B cell (primary cell): ENCODE measurements at regions of chr20 and their contacts with region 1.

Region 1: DNA sequence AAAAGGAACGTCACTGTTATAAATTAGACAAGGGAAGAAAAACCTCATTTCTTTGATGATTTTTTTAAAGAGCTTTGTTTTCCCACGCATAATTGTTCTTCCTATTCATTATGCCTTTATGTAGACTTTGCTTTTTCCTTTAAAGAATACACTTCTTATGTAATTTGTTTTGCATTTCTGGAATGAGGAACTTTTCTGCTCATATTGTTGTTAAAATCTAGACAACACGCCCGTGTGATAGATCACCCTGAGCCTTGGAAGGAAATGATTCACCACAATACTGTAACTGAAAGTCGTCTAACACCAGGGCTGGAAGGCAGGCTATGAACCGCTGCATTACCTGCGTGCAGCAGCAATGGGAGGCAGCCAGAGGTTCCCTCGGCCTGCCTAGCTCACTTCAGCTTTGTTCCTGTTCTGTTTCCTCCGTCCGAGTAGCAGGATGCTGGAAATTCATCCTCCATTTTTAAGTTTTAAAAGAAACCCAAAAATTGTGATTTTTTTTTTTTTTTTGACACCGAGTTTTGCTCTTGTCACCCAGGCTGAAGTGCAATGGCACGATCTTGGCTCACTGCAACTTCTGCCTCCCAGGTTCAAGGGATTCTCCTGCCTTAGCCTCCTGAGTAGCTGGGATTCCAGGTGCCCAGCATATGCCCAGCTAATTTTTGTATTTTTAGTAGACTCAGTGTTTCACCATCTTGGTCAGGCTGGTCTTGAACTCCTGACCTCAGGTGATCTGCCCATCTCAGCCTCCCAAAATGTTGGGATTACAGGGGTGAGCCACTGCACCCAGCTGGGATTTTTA is 49.6 kb upstream of the ZNF217 start:
- DNase-seq: peak; percentile 74
- ATAC-seq: peak; percentile 90
- H3K4me3 ChIP-seq: peak overlapping the region in 4 of 5 experiments; percentile 0 to 43 (median 24)
- H3K4me3 Mint-ChIP-seq: peak overlapping the region; percentile 82
- H3K27ac ChIP-seq: peak overlapping the region; percentile 64 to 85
- H3K27ac Mint-ChIP-seq: peak overlapping the region; percentile 95
- H3K4me1 ChIP-seq: peaks cover 23 to 26% of the 10 kb centered on the region in 2 donors
- H3K4me1 Mint-ChIP-seq: peaks cover 31% of the 10 kb centered on the region
- H3K27me3 ChIP-seq: no peaks in the 10 kb centered on the region
- H3K27me3 Mint-ChIP-seq: no peaks in the 10 kb centered on the region
- CTCF ChIP-seq: no peak

Region 2: DNA sequence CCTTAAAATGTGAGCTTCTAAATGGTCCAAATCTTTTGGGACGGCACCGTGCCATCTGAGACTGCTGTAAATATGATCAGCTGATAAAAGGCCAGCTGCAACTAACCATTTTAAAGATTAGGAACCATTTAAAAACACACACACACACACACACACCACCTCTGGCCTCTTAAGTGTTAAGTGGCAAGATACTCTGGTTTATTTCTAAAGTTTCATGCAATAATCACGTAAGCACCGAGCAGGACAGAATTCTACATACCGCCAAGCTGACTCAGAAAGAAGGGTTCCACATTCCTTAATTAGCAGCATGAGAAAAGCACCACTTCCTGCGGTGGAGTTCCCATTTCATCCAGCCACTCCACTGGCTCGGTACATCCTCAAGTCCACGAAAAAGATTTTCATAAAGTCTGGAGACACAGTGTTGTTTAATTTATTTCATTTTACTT is 31.8 kb before region 1 on chr20:
- CTCF ChIA-PET with region 1: interaction called, 5 read pairs
- POLR2A ChIA-PET with region 1: interaction called, 4 read pairs
- intact Hi-C with region 1: loop called (anchors 2 kb)
- DNase-seq: no peak
- ATAC-seq: no peak
- H3K4me3 ChIP-seq: no peak overlapping the region
- H3K4me3 Mint-ChIP-seq: peak overlapping the region; percentile 27
- H3K27ac ChIP-seq: no peak overlapping the region
- H3K27ac Mint-ChIP-seq: peak overlapping the region; percentile 62
- H3K4me1 ChIP-seq: peaks cover 28% of the 10 kb centered on the region in 2 donors
- H3K4me1 Mint-ChIP-seq: peaks cover 34% of the 10 kb centered on the region
- H3K27me3 ChIP-seq: no peaks in the 10 kb centered on the region
- H3K27me3 Mint-ChIP-seq: no peaks in the 10 kb centered on the region
- CTCF ChIP-seq: no peak

Region 3: GRCh38 chr20:53677447-53678314 is 34.4 kb after region 1 on chr20:
- CTCF ChIA-PET with region 1: no interaction called
- POLR2A ChIA-PET with region 1: no interaction called
- intact Hi-C with region 1: loop called (anchors 5 kb)
- DNase-seq: no peak
- ATAC-seq: no peak
- H3K4me3 ChIP-seq: peak overlapping the region in 3 of 5 experiments; percentile 7 to 36 (median 11)
- H3K4me3 Mint-ChIP-seq: peak overlapping the region; percentile 63
- H3K27ac ChIP-seq: no peak overlapping the region
- H3K27ac Mint-ChIP-seq: peak overlapping the region; percentile 77
- H3K4me1 ChIP-seq: peaks cover 24 to 25% of the 10 kb centered on the region in 2 donors
- H3K4me1 Mint-ChIP-seq: peaks cover 25% of the 10 kb centered on the region
- H3K27me3 ChIP-seq: no peaks in the 10 kb centered on the region
- H3K27me3 Mint-ChIP-seq: no peaks in the 10 kb centered on the region
- CTCF ChIP-seq: no peak

Region 4: GRCh38 chr20:53699958-53700305 is 56.7 kb after region 1 on chr20:
- CTCF ChIA-PET with region 1: no interaction called
- POLR2A ChIA-PET with region 1: no interaction called
- intact Hi-C with region 1: no loop called
- DNase-seq: no peak
- ATAC-seq: no peak
- H3K4me3 ChIP-seq: no peak overlapping the region
- H3K4me3 Mint-ChIP-seq: no peak overlapping the region
- H3K27ac ChIP-seq: no peak overlapping the region
- H3K27ac Mint-ChIP-seq: no peak overlapping the region
- H3K4me1 ChIP-seq: no peaks in the 10 kb centered on the region
- H3K4me1 Mint-ChIP-seq: peaks cover 4% of the 10 kb centered on the region
- H3K27me3 ChIP-seq: no peaks in the 10 kb centered on the region
- H3K27me3 Mint-ChIP-seq: no peaks in the 10 kb centered on the region
- CTCF ChIP-seq: no peak